CD4-positive, alpha-beta memory T cell (primary cell): ENCODE measurements at regions of chr9 and their contacts with region 1.

Region 1: DNA sequence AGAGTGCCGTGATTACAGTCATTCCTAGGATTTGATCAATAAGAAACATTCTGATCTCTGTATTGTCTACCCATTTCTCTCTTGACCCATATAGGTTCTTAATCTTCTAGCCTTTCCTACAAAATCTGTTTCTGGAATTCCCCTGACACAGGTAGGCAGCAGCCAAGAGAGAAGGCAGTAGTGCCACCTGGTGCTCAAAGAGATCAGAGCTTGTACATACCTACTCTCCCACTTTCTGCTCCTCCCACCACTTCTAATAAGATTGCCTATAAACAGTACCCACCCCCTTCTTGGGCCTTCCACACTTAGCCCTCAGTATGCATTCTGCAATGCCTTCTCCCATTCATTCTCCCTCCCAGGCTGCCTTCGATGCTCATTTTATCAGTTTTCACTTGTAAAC is 117.4 kb upstream of the RORB start:
- DNase-seq: peak; percentile 0 to 35 (median 25)
- H3K4me3 ChIP-seq: no peak overlapping the region
- H3K4me3 Mint-ChIP-seq: no peak overlapping the region
- H3K27ac ChIP-seq: no peak overlapping the region
- H3K27ac Mint-ChIP-seq: no peak overlapping the region
- H3K4me1 ChIP-seq: no peaks in the 10 kb centered on the region
- H3K4me1 Mint-ChIP-seq: peaks cover 3 to 6% (median 5%) of the 10 kb centered on the region in 4 donors
- H3K27me3 ChIP-seq: no peaks in the 10 kb centered on the region
- H3K27me3 Mint-ChIP-seq: no peaks in the 10 kb centered on the region

Region 2: DNA sequence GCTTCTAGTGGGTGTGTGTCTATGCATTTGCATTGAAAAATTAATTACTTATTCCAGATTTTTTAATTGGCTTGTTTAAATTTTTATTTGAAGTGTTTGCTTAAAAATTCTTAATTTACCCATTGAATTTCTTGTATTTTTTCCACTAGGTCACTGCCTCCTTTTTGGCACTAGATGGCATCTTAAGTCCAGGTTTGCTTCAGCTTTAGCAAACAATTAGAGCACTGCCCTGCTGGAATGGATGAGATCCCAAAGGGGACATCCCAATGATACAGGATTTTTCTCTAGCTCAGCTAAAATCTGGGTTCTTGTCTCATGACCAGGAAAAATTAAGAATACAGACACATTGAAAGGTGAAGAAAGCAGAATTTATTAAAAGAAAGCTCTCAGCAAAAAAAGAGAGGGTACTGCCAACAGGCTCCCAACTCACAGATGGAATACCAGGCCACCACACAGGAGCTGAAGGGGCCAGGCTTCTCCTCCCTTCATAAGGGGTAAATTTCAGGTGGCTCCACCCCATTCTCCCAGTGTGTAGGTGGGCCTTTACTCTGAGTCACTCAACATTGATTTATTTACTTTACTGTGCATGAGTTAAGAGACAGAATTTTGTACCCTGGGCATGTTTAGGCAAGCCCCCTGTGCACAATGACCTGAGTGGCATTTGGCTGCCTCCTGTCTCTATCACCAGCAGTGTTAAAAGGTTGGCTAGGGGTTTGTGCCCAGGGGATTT is 695.7 kb before region 1 on chr9:
- CTCF ChIA-PET with region 1: no interaction called
- POLR2A ChIA-PET with region 1: no interaction called
- intact Hi-C with region 1: loop called (anchors 10 kb)
- DNase-seq: no peak
- H3K4me3 ChIP-seq: no peak overlapping the region
- H3K4me3 Mint-ChIP-seq: no peak overlapping the region
- H3K27ac ChIP-seq: no peak overlapping the region
- H3K27ac Mint-ChIP-seq: no peak overlapping the region
- H3K4me1 ChIP-seq: no peaks in the 10 kb centered on the region
- H3K4me1 Mint-ChIP-seq: no peaks in the 10 kb centered on the region
- H3K27me3 ChIP-seq: no peaks in the 10 kb centered on the region
- H3K27me3 Mint-ChIP-seq: no peaks in the 10 kb centered on the region

Region 3: GRCh38 chr9:74036549-74037231 is 343.0 kb before region 1 on chr9:
- CTCF ChIA-PET with region 1: no interaction called
- POLR2A ChIA-PET with region 1: no interaction called
- intact Hi-C with region 1: loop called (anchors 10 kb)
- DNase-seq: no peak
- H3K4me3 ChIP-seq: no peak overlapping the region
- H3K4me3 Mint-ChIP-seq: no peak overlapping the region
- H3K27ac ChIP-seq: no peak overlapping the region
- H3K27ac Mint-ChIP-seq: no peak overlapping the region
- H3K4me1 ChIP-seq: no peaks in the 10 kb centered on the region
- H3K4me1 Mint-ChIP-seq: no peaks in the 10 kb centered on the region
- H3K27me3 ChIP-seq: no peaks in the 10 kb centered on the region
- H3K27me3 Mint-ChIP-seq: no peaks in the 10 kb centered on the region

Region 4: DNA sequence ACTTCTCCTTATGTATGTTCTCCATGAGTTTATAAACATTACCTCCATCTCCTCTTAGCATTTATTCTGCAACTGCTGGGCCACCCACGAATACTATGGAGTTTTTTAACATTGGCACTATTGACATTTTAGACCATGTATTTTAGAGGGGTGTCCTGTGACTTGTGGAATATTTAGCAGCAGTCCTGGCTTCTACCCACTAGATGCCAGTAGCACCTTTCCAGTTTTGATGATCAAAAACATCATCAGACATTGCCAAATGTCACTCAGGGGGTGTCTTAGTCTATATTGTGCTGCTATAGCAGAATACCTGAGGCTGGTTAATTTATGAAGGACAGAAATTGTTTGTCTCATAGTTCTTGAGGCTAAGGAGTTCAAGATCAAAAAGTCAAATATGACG is 70.1 kb before region 1 on chr9:
- CTCF ChIA-PET with region 1: no interaction called
- POLR2A ChIA-PET with region 1: no interaction called
- intact Hi-C with region 1: no loop called
- DNase-seq: no peak
- H3K4me3 ChIP-seq: no peak overlapping the region
- H3K4me3 Mint-ChIP-seq: no peak overlapping the region
- H3K27ac ChIP-seq: no peak overlapping the region
- H3K27ac Mint-ChIP-seq: no peak overlapping the region
- H3K4me1 ChIP-seq: no peaks in the 10 kb centered on the region
- H3K4me1 Mint-ChIP-seq: no peaks in the 10 kb centered on the region
- H3K27me3 ChIP-seq: no peaks in the 10 kb centered on the region
- H3K27me3 Mint-ChIP-seq: no peaks in the 10 kb centered on the region

Region 5: GRCh38 chr9:74322661-74323314 is 56.9 kb before region 1 on chr9:
- CTCF ChIA-PET with region 1: no interaction called
- POLR2A ChIA-PET with region 1: no interaction called
- intact Hi-C with region 1: loop called (anchors 10 kb)
- DNase-seq: peak in 1 of 5 donors; percentile 2
- H3K4me3 ChIP-seq: no peak overlapping the region
- H3K4me3 Mint-ChIP-seq: peak overlapping the region in 6 of 8 donors; percentile 18 to 89 (median 66)
- H3K27ac ChIP-seq: no peak overlapping the region
- H3K27ac Mint-ChIP-seq: peak overlapping the region in 4 of 7 donors; percentile 58 to 87 (median 80)
- H3K4me1 ChIP-seq: no peaks in the 10 kb centered on the region
- H3K4me1 Mint-ChIP-seq: peaks cover 0 to 8% (median 3%) of the 10 kb centered on the region in 4 donors
- H3K27me3 ChIP-seq: no peaks in the 10 kb centered on the region
- H3K27me3 Mint-ChIP-seq: peaks cover 0 to 1% of the 10 kb centered on the region in 2 donors